ENCODE measurements at regions of chr16 and their contacts with region 1.

Region 1: GRCh38 chr16:75148311-75149195 is at the start of gene ZFP1:
- DNase-seq: peak; percentile 97
- ATAC-seq: peak; percentile 86
- H3K4me3 Mint-ChIP-seq: peak within 1 kb of the TSS; percentile 89
- H3K27ac Mint-ChIP-seq: peak within 1 kb of the TSS; percentile 87
- H3K4me1 Mint-ChIP-seq: peaks cover 29% of the 10 kb centered on the region
- H3K27me3 Mint-ChIP-seq: no peaks in the 10 kb centered on the region
- CTCF ChIP-seq: no peak
- total RNA-seq, gene ZFP1: 15.4 and 18.5 TPM in 2 replicates

Region 2: GRCh38 chr16:74606521-74607310 is 541.8 kb before region 1 on chr16 and contains the start of gene GLG1:
- CTCF ChIA-PET with region 1: no interaction called
- POLR2A ChIA-PET with region 1: no interaction called
- intact Hi-C with region 1: loop called (anchors 2 kb)
- DNase-seq: peak; percentile 94
- ATAC-seq: peak; percentile 96
- H3K4me3 Mint-ChIP-seq: peak within 1 kb of the TSS; percentile 94
- H3K27ac Mint-ChIP-seq: peak within 1 kb of the TSS; percentile 91
- H3K4me1 Mint-ChIP-seq: peaks cover 45% of the 10 kb centered on the region
- H3K27me3 Mint-ChIP-seq: no peaks in the 10 kb centered on the region
- CTCF ChIP-seq: no peak
- total RNA-seq, gene GLG1: 72.7 and 81.4 TPM in 2 replicates

Region 3: DNA sequence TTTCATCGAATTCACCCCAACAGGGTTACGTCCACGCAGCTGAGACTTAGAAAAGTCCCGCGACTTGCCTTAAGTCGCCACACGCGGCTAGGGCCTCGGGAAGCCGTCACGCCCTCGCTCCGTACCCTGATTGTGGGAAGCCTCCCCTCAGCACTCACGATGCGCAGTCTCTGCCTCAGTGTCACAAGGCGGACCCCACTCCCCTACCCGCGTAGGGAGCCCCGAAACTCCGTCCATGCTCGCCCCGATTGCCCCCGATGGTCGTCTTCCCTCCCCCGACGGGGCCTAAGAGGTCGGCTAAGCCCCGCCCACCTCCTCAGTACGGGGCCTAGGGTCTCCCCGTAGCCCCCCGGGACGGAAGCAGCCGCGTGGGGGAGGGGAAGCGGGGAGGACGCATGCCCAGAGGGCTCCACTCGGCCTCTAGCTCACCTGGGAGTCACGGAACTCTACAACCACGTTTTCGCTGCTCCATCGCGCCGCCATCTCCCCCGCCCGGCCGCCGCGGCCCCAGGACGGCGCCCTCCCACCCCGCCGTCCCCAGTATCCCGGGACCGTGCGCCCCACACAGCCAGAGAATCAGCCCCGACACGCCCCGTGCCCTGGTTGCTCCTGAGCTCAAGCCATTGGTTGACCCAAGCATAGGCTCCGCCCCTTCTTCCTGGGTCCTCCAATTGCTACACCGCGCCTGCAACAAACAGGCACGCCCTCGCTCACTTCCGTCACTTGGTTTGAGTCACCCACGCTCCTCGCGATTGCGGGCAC is 163.8 kb before region 1 on chr16 and contains the start of gene WDR59:
- CTCF ChIA-PET with region 1: no interaction called
- POLR2A ChIA-PET with region 1: no interaction called
- intact Hi-C with region 1: loop called (anchors 1 kb)
- DNase-seq: peak; percentile 90
- ATAC-seq: peak; percentile 99
- H3K4me3 Mint-ChIP-seq: peak within 1 kb of the TSS; percentile 96
- H3K27ac Mint-ChIP-seq: peak within 1 kb of the TSS; percentile 88
- H3K4me1 Mint-ChIP-seq: peaks cover 20% of the 10 kb centered on the region
- H3K27me3 Mint-ChIP-seq: no peaks in the 10 kb centered on the region
- CTCF ChIP-seq: no peak
- total RNA-seq, gene WDR59: 80.8 and 93.3 TPM in 2 replicates

Region 4: GRCh38 chr16:75218256-75219070 is 69.9 kb after region 1 on chr16 and contains the start of gene CTRB1:
- CTCF ChIA-PET with region 1: no interaction called
- POLR2A ChIA-PET with region 1: no interaction called
- intact Hi-C with region 1: loop called (anchors 2 kb)
- DNase-seq: no peak
- ATAC-seq: peak; percentile 67
- H3K4me3 Mint-ChIP-seq: peak within 1 kb of the TSS; percentile 70
- H3K27ac Mint-ChIP-seq: peak within 1 kb of the TSS; percentile 63
- H3K4me1 Mint-ChIP-seq: peaks cover 11% of the 10 kb centered on the region
- H3K27me3 Mint-ChIP-seq: peaks cover 5% of the 10 kb centered on the region
- CTCF ChIP-seq: no peak
- total RNA-seq, gene CTRB1: not detected in 2 replicates

Region 5: GRCh38 chr16:75519881-75520280 is 371.3 kb after region 1 on chr16:
- CTCF ChIA-PET with region 1: no interaction called
- POLR2A ChIA-PET with region 1: no interaction called
- intact Hi-C with region 1: loop called (anchors 1 kb)
- DNase-seq: no peak
- ATAC-seq: no peak
- H3K4me3 Mint-ChIP-seq: no peak overlapping the region
- H3K27ac Mint-ChIP-seq: no peak overlapping the region
- H3K4me1 Mint-ChIP-seq: peaks cover 13% of the 10 kb centered on the region
- H3K27me3 Mint-ChIP-seq: no peaks in the 10 kb centered on the region
- CTCF ChIP-seq: no peak

Region 6: DNA sequence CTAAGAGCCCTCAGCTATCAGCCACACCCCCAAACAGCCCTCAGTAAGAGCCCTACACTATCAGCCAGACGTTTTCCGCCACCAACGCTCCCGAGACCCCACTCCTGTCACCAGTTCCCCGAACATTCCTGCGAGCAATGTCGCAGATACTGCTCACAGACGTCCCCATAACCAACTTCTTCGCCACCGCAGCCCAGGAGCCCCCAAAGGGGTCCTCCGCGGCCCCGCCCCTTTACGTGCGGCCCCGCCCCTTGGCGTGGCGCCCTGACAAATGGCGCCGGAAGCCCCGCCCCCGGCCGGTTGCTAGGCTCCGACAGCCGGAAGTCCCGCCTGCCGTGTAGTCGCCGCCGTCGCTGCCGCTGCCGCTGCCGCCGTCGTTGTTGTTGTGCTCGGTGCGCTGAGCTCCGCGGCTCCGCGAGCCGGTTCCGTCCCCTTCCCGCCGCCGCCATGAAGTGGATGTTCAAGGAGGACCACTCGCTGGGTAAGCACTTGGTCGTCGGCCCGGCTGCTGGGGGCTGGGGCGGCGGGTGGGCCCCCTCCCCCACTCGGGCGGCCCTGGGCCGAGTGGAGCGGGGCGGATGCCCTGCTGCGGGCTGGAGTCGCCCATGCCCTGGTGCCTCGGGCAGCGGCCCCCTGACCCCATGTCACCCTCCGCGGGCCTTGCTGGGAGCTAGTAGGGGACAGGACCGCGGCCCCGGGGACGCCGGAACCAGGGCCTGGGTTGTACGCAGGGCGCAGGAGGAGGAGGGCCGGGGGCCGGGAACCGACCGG is 417.7 kb after region 1 on chr16 and contains the start of gene GABARAPL2:
- CTCF ChIA-PET with region 1: no interaction called
- POLR2A ChIA-PET with region 1: no interaction called
- intact Hi-C with region 1: loop called (anchors 1 kb)
- DNase-seq: peak; percentile 98
- ATAC-seq: peak; percentile 69
- H3K4me3 Mint-ChIP-seq: peak within 1 kb of the TSS; percentile 100
- H3K27ac Mint-ChIP-seq: peak within 1 kb of the TSS; percentile 98
- H3K4me1 Mint-ChIP-seq: peaks cover 57% of the 10 kb centered on the region
- H3K27me3 Mint-ChIP-seq: no peaks in the 10 kb centered on the region
- CTCF ChIP-seq: no peak
- total RNA-seq, gene GABARAPL2: 62.9 and 69.4 TPM in 2 replicates

Region 7: GRCh38 chr16:75764154-75764768 is 615.7 kb after region 1 on chr16:
- CTCF ChIA-PET with region 1: no interaction called
- POLR2A ChIA-PET with region 1: no interaction called
- intact Hi-C with region 1: loop called (anchors 2 kb)
- DNase-seq: no peak
- ATAC-seq: peak; percentile 56
- H3K4me3 Mint-ChIP-seq: no peak overlapping the region
- H3K27ac Mint-ChIP-seq: no peak overlapping the region
- H3K4me1 Mint-ChIP-seq: peaks cover 25% of the 10 kb centered on the region
- H3K27me3 Mint-ChIP-seq: peaks cover 6% of the 10 kb centered on the region
- CTCF ChIP-seq: peak; percentile 37

Measured in activated B cell treated with CpG ODN at 0.5 μM for 24 hours (primary cell).